ENCODE measurements at regions of chr15 and their contacts with region 1.

Region 1: GRCh38 chr15:67833710-67834511 is 5.9 kb downstream of the RNU6-1 start:
- H3K4me3 Mint-ChIP-seq: peak overlapping the region; percentile 67
- H3K27ac Mint-ChIP-seq: no peak overlapping the region
- H3K4me1 Mint-ChIP-seq: peaks cover 77% of the 10 kb centered on the region
- H3K27me3 Mint-ChIP-seq: peaks cover 76% of the 10 kb centered on the region

Region 2: GRCh38 chr15:67501177-67501835 is 332.6 kb before region 1 on chr15:
- intact Hi-C with region 1: loop called (anchors 5 kb)
- H3K4me3 Mint-ChIP-seq: no peak overlapping the region
- H3K27ac Mint-ChIP-seq: no peak overlapping the region
- H3K4me1 Mint-ChIP-seq: peaks cover 25% of the 10 kb centered on the region
- H3K27me3 Mint-ChIP-seq: no peaks in the 10 kb centered on the region

Region 3: DNA sequence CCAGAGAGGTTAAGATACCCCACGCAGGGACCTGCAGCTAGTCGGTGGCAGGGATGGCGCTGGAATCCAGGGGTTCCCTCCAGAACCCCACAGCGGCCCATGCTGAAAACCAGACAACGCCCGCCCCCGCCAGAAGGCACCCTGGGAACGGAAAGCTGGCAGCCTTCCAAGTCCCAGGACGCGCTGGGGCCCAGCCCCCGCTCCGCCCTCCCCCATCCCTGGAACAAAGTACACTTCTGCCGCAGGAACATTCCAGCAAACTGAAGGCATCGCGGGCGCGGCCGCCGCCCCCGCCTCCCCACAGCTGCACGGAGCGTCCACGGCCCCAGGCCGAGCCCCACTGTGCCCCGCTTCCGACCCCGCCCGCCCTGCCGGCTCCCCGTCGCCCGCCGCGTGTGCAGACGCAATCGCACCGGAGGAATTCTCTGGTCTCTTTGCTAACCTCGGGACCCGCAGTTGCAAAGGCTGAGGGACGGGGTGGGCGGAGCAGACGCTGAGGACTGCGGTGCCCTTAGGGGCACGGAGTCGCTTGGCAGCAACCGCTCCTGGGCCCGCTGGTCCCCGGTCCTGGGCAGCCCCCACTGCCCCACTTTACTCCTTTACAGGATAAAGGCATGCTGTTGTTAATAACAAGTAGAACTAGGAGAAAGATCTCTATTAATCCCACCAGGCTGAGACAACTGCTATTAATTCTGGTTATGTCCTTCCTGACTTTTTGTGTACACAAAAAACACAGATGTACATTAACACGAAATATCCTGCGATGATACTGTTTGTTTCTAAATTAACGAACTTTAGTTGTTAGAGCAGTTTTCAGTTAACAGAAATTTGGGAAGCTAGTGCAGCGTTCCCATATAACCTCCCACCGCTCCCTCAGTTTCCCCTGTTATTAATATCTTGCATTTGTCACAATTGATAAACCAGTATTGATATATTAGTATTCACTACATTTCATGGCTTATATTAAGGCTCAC is 50.9 kb after region 1 on chr15:
- intact Hi-C with region 1: no loop called
- H3K4me3 Mint-ChIP-seq: peak overlapping the region; percentile 70
- H3K27ac Mint-ChIP-seq: peak overlapping the region; percentile 88
- H3K4me1 Mint-ChIP-seq: peaks cover 77% of the 10 kb centered on the region
- H3K27me3 Mint-ChIP-seq: no peaks in the 10 kb centered on the region

Region 4: DNA sequence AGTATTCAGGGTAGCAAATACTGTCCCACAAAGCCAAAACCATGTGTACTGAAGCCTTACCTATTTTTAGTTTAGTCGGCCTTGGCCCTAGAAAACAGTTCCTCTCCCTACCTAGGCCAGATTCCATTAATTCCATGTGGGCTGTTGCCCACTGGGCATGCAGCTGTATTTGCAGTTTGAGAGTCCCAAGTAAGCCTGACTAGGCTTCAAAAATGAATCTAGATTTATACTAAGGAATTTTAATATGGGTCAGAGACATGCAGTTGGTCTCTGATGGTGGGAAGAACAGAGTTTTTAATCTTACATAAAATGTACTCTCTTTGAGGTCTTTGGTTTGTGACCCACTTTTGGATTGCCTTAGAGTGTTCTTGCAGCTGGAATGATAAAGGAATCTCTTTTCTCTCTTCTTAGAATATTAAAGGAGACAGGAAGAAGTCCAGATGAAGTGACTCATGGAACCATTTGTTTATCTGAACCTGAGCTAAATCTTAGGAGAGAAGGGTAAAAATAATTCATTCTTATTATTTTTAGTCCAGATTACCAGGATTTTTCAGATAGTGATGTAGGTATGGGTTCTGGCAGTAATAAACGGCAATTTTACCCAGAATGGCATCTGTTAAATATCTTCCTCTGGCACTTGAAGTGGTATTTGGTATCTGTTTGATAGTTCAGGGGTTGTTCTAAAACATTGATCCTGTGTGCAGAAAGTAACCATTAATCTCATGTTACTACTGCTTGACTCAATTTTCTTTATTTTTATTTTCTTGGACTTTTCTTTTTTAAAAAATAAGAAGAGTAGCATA is 1360.3 kb after region 1 on chr15:
- intact Hi-C with region 1: no loop called
- H3K4me3 Mint-ChIP-seq: no peak overlapping the region
- H3K27ac Mint-ChIP-seq: no peak overlapping the region
- H3K4me1 Mint-ChIP-seq: no peaks in the 10 kb centered on the region
- H3K27me3 Mint-ChIP-seq: no peaks in the 10 kb centered on the region

Measured in dendritic cell treated with granulocyte-macrophage colony-stimulating factor and Interleukin-4, amounts not matched to agents 40 ng/mL and 50 ng/mL, for 4 days (primary cell).